GM12878 (cell line): ENCODE measurements at regions of chrX and their contacts with region 1.

Region 1: GRCh38 chrX:55919367-55920221 is 202.0 kb downstream of the RRAGB start:
- DNase-seq: peak; percentile 85
- ATAC-seq: peak; percentile 86
- H3K4me3 ChIP-seq: no peak overlapping the region
- H3K27ac ChIP-seq: peak overlapping the region; percentile 89
- H3K4me1 ChIP-seq: peaks cover 7% of the 10 kb centered on the region
- H3K27me3 ChIP-seq: no peaks in the 10 kb centered on the region
- CTCF ChIP-seq: peak; percentile 23 to 31 (median 25); a peak in 3 of 6 replicates
- EP300 ChIP-seq: peak; percentile 71 to 80
- POLR2A ChIP-seq: peak; percentile 60; the same call in 1 of the 2 replicates
- RAD21 ChIP-seq: peak; percentile 46

Region 2: GRCh38 chrX:55640854-55641253 is 278.7 kb before region 1 on chrX:
- CTCF ChIA-PET with region 1: no interaction called
- POLR2A ChIA-PET with region 1: no interaction called
- RAD21 ChIA-PET with region 1: interaction called, 3 read pairs
- SMC1A ChIA-PET with region 1: no interaction called
- in situ Hi-C with region 1: no loop called
- intact Hi-C with region 1: loop called (anchors 10 kb)
- DNase-seq: peak; percentile 32
- ATAC-seq: peak; percentile 92
- H3K4me3 ChIP-seq: no peak overlapping the region
- H3K27ac ChIP-seq: no peak overlapping the region
- H3K4me1 ChIP-seq: no peaks in the 10 kb centered on the region
- H3K27me3 ChIP-seq: no peaks in the 10 kb centered on the region
- CTCF ChIP-seq: no peak
- EP300 ChIP-seq: peak in 1 of 2 experiments; percentile 27; a peak in 1 of 4 replicates
- POLR2A ChIP-seq: no peak
- RAD21 ChIP-seq: no peak

Region 3: GRCh38 chrX:55754861-55755294 is 164.7 kb before region 1 on chrX:
- CTCF ChIA-PET with region 1: interaction called, 4 read pairs
- POLR2A ChIA-PET with region 1: interaction called, 3 read pairs
- RAD21 ChIA-PET with region 1: interaction called, 13 read pairs
- SMC1A ChIA-PET with region 1: interaction called, 4 read pairs
- in situ Hi-C with region 1: no loop called
- intact Hi-C with region 1: no loop called
- DNase-seq: peak; percentile 64
- ATAC-seq: peak; percentile 97
- H3K4me3 ChIP-seq: no peak overlapping the region
- H3K27ac ChIP-seq: peak overlapping the region; percentile 41
- H3K4me1 ChIP-seq: peaks cover 2% of the 10 kb centered on the region
- H3K27me3 ChIP-seq: no peaks in the 10 kb centered on the region
- CTCF ChIP-seq: no peak
- EP300 ChIP-seq: peak in 1 of 2 experiments; percentile 39; a peak in 2 of 4 replicates
- POLR2A ChIP-seq: no peak
- RAD21 ChIP-seq: no peak

Region 4: DNA sequence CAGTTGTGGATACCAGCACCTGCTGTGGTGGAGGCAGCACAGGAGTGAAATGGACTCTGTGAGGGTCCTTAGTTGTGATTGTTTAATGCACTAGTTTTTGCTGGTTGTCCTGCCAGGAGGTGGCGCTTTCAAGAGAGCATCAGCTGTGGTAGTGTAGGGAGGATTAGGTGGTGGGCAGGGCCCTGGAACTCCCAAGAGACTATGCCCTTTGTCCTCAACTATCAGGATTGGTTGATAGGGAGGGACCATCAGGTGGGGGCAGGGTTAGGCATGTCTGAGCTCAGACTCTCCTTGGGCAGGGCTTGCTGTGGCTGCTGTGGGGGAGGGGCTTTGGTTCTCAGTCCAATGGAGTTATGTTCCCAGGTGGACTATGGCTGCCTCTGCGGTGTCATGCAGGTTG is 80.1 kb before region 1 on chrX:
- CTCF ChIA-PET with region 1: interaction called, 5 read pairs
- POLR2A ChIA-PET with region 1: no interaction called
- RAD21 ChIA-PET with region 1: interaction called, 4 read pairs
- SMC1A ChIA-PET with region 1: interaction called, 14 read pairs
- in situ Hi-C with region 1: no loop called
- intact Hi-C with region 1: no loop called
- DNase-seq: no peak
- ATAC-seq: peak; percentile 34; the same call in 2 of the 3 replicates
- H3K4me3 ChIP-seq: no peak overlapping the region
- H3K27ac ChIP-seq: no peak overlapping the region
- H3K4me1 ChIP-seq: no peaks in the 10 kb centered on the region
- H3K27me3 ChIP-seq: no peaks in the 10 kb centered on the region
- CTCF ChIP-seq: no peak
- EP300 ChIP-seq: no peak
- POLR2A ChIP-seq: no peak
- RAD21 ChIP-seq: peak; percentile 34; the same call in 1 of the 2 replicates

Region 5: DNA sequence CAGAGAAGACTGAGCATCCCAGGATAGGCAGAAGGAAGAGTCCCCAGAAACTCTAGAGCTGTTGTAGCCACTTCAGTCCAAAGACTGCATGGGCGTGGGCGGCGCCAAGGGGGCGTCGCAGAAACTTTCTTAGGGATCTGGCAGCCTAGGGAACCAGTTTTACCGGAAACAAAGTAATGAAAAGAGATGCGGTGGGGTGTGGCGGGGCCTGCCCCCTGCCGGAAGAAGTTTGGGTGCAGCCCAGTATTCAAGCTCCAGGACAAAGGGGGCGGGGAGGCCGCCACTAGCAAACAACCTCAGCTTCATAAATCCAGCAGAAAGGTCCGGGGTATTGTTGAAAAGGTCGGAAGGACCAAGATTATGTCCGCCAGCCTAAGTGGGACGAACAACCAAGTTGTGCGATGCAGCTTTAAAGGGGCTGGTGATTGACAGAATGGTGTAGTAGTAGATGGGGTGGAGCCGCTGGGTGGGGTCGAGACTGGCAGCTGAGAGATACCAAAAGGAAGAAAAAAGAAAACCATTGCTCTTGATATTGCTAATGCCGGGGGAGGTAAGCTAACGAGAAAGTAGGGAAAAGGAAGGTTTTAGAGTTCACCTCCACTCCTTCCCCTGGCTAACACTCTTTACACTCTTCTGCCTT is 11.5 kb before region 1 on chrX:
- CTCF ChIA-PET with region 1: interaction called, 33 read pairs
- POLR2A ChIA-PET with region 1: interaction called, 10 read pairs
- RAD21 ChIA-PET with region 1: interaction called, 43 read pairs
- SMC1A ChIA-PET with region 1: interaction called, 45 read pairs
- in situ Hi-C with region 1: no loop called
- intact Hi-C with region 1: loop called (anchors 1 kb)
- DNase-seq: no peak
- ATAC-seq: peak; percentile 78
- H3K4me3 ChIP-seq: peak overlapping the region; percentile 76
- H3K27ac ChIP-seq: peak overlapping the region; percentile 87
- H3K4me1 ChIP-seq: no peaks in the 10 kb centered on the region; the same call in 1 of the 2 replicates
- H3K27me3 ChIP-seq: no peaks in the 10 kb centered on the region
- CTCF ChIP-seq: peak; percentile 52 to 60 (median 58)
- EP300 ChIP-seq: no peak
- POLR2A ChIP-seq: no peak
- RAD21 ChIP-seq: peak; percentile 58

Region 6: DNA sequence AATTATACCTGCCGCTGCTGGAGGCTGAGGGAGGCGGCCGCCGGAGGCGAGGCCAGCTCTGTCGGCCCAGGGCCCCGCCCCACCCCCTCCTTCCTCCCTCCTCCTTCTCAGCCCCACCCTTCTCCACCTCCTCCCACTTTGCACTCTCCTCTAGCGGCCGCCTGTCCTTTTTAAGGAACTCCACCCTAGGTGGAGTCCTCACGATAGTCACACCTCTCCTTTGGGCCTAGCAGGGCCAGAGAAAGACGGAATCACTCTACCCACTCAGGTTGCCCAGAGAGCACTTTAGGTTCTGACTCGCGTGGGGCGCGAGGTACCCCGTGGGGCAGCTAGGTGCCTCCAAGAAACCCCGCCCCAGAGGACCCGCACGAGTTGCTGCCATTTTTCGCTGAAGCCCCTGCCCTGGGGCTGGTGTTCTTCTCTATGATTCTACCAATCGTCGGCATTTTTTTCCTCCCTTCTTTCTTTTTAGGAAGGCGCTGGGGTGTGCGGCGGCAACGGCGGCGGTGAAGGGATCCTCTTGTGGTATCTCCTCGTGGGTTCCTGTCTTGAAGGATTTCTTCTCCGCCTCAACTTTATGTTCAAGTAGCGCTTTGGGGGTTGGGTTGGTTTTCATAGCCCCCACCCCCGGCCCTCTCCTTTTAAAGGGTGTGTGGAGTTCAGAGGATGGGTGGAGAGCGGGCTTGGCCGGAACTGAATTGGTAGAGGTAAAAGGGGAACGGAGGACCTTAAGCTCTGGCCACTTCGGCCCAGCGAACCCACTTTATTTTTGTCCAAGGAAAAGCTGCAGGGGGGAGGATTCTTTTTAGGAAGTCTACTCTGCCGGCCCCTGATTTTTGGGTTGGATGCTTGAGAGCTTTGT is 312.9 kb after region 1 on chrX and contains the start of gene KLF8:
- CTCF ChIA-PET with region 1: interaction called, 13 read pairs
- POLR2A ChIA-PET with region 1: interaction called, 5 read pairs
- RAD21 ChIA-PET with region 1: interaction called, 9 read pairs
- SMC1A ChIA-PET with region 1: interaction called, 4 read pairs
- in situ Hi-C with region 1: no loop called
- intact Hi-C with region 1: loop called (anchors 5 kb)
- DNase-seq: no peak
- ATAC-seq: peak; percentile 79
- H3K4me3 ChIP-seq: peak within 1 kb of the TSS; percentile 49
- H3K27ac ChIP-seq: peak within 1 kb of the TSS; percentile 25; the same call in 1 of the 2 replicates
- H3K4me1 ChIP-seq: no peaks in the 10 kb centered on the region
- H3K27me3 ChIP-seq: no peaks in the 10 kb centered on the region
- CTCF ChIP-seq: no peak
- EP300 ChIP-seq: no peak
- POLR2A ChIP-seq: no peak
- RAD21 ChIP-seq: no peak
- polyA plus RNA-seq, gene KLF8: 0.31 to 0.39 TPM

Region 7: GRCh38 chrX:56563231-56564161 is 643.9 kb after region 1 on chrX and contains the start of gene UBQLN2:
- CTCF ChIA-PET with region 1: no interaction called
- POLR2A ChIA-PET with region 1: no interaction called
- RAD21 ChIA-PET with region 1: no interaction called
- SMC1A ChIA-PET with region 1: no interaction called
- in situ Hi-C with region 1: no loop called
- intact Hi-C with region 1: loop called (anchors 5 kb)
- DNase-seq: no peak
- ATAC-seq: peak; percentile 84
- H3K4me3 ChIP-seq: peak within 1 kb of the TSS; percentile 76
- H3K27ac ChIP-seq: peak within 1 kb of the TSS; percentile 77
- H3K4me1 ChIP-seq: no peaks in the 10 kb centered on the region
- H3K27me3 ChIP-seq: no peaks in the 10 kb centered on the region
- CTCF ChIP-seq: no peak
- EP300 ChIP-seq: no peak
- POLR2A ChIP-seq: peak; percentile 93
- RAD21 ChIP-seq: no peak
- polyA plus RNA-seq, gene UBQLN2: 2.4 to 6.2 TPM